ENCODE measurements at regions of chr4 and their contacts with region 1.

Region 1: DNA sequence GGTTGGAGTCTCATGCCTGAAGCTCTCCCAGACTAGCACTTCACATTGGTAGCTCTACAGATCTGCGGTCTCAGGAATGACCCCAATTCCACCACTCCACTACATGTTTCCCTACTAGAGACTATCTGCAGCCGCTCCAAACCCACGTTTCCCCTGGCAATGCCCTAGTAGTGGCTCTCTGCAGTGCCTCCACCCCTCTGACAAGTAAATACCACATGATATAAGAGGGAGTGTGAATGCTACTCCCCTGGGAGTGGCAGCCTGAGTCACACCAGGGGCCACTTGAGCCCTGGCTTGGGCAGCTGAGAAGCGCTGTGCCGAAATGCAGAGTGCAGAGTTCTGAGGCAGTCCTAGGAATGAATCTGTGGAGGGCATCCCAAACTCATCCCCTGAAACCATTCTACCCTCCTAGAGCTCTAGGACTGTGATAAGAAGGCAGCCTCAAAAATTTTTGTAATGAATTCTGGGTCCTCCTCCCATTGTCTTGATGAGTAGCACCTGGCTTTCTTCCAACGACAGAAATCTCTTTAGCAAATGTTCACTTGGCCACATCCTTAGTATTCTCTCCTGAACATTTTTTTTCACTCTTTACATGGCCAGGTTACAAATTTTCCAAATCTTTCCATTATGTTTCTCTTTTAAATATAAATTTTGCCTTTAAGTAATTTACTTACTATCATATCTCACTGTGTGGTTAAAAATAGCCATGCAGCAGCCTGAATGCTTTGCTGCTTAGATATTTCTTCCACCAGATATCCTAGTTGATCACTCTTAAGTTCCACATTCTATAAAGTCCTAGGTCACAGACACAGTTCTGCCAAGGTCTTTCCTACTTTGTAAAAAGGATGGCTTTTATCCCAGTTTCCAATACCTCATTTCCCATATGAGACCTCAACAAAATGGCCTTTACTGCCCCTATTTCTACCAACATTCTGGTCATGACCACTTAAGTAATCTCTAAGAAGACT is 160.2 kb upstream of the CPEB2 start:
- DNase-seq: no peak
- H3K4me3 ChIP-seq: no peak overlapping the region
- H3K4me3 Mint-ChIP-seq: no peak overlapping the region
- H3K27ac Mint-ChIP-seq: no peak overlapping the region
- H3K4me1 ChIP-seq: no peaks in the 10 kb centered on the region
- H3K4me1 Mint-ChIP-seq: no peaks in the 10 kb centered on the region
- H3K27me3 ChIP-seq: no peaks in the 10 kb centered on the region
- H3K27me3 Mint-ChIP-seq: no peaks in the 10 kb centered on the region
- CTCF ChIP-seq: no peak

Region 2: GRCh38 chr4:14771094-14771493 is 71.0 kb before region 1 on chr4:
- CTCF ChIA-PET with region 1: no interaction called
- POLR2A ChIA-PET with region 1: no interaction called
- intact Hi-C with region 1: no loop called
- DNase-seq: no peak
- H3K4me3 ChIP-seq: no peak overlapping the region
- H3K4me3 Mint-ChIP-seq: no peak overlapping the region
- H3K27ac Mint-ChIP-seq: no peak overlapping the region
- H3K4me1 ChIP-seq: no peaks in the 10 kb centered on the region
- H3K4me1 Mint-ChIP-seq: no peaks in the 10 kb centered on the region
- H3K27me3 ChIP-seq: no peaks in the 10 kb centered on the region
- H3K27me3 Mint-ChIP-seq: peaks cover 5% of the 10 kb centered on the region
- CTCF ChIP-seq: no peak

Region 3: DNA sequence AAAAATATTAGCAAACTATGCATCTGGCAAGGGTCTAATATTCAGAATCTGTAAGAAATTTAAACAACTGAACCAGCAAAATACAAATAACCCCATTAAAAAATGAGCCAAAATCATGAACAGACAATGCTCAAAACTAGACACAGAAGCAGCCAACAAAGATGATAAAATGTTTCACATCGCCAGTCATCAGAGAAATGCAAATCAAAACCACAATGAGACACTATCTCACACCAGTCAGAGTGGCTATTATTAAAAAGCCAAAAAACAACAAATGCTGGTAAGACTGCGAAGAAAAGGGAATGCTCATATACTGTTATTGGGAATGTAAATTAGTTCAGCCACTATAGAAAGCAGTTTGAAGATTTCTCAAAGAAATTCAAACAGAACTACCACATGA is 41.1 kb before region 1 on chr4:
- CTCF ChIA-PET with region 1: no interaction called
- POLR2A ChIA-PET with region 1: no interaction called
- intact Hi-C with region 1: loop called (anchors 1 kb)
- DNase-seq: no peak
- H3K4me3 ChIP-seq: no peak overlapping the region
- H3K4me3 Mint-ChIP-seq: no peak overlapping the region
- H3K27ac Mint-ChIP-seq: no peak overlapping the region
- H3K4me1 ChIP-seq: no peaks in the 10 kb centered on the region
- H3K4me1 Mint-ChIP-seq: no peaks in the 10 kb centered on the region
- H3K27me3 ChIP-seq: no peaks in the 10 kb centered on the region
- H3K27me3 Mint-ChIP-seq: no peaks in the 10 kb centered on the region
- CTCF ChIP-seq: no peak

Region 4: GRCh38 chr4:14827111-14827510 is 15.0 kb before region 1 on chr4:
- CTCF ChIA-PET with region 1: no interaction called
- POLR2A ChIA-PET with region 1: no interaction called
- intact Hi-C with region 1: no loop called
- DNase-seq: no peak
- H3K4me3 ChIP-seq: no peak overlapping the region
- H3K4me3 Mint-ChIP-seq: no peak overlapping the region
- H3K27ac Mint-ChIP-seq: no peak overlapping the region
- H3K4me1 ChIP-seq: no peaks in the 10 kb centered on the region
- H3K4me1 Mint-ChIP-seq: no peaks in the 10 kb centered on the region
- H3K27me3 ChIP-seq: no peaks in the 10 kb centered on the region
- H3K27me3 Mint-ChIP-seq: peaks cover 2% of the 10 kb centered on the region
- CTCF ChIP-seq: no peak